Vagina (tissue), 2 donors: ENCODE measurements at regions of chr9 and their contacts with region 1.

Region 1: GRCh38 chr9:92717201-92718085 is 47.2 kb downstream of the BICD2 start:
- DNase-seq: no peak
- H3K4me3 ChIP-seq: no peak overlapping the region
- H3K27ac ChIP-seq: peak overlapping the region; percentile 70
- H3K4me1 ChIP-seq: peaks cover 40% of the 10 kb centered on the region
- H3K27me3 ChIP-seq: no peaks in the 10 kb centered on the region
- CTCF ChIP-seq: no peak
- POLR2A ChIP-seq: no peak

Region 2: DNA sequence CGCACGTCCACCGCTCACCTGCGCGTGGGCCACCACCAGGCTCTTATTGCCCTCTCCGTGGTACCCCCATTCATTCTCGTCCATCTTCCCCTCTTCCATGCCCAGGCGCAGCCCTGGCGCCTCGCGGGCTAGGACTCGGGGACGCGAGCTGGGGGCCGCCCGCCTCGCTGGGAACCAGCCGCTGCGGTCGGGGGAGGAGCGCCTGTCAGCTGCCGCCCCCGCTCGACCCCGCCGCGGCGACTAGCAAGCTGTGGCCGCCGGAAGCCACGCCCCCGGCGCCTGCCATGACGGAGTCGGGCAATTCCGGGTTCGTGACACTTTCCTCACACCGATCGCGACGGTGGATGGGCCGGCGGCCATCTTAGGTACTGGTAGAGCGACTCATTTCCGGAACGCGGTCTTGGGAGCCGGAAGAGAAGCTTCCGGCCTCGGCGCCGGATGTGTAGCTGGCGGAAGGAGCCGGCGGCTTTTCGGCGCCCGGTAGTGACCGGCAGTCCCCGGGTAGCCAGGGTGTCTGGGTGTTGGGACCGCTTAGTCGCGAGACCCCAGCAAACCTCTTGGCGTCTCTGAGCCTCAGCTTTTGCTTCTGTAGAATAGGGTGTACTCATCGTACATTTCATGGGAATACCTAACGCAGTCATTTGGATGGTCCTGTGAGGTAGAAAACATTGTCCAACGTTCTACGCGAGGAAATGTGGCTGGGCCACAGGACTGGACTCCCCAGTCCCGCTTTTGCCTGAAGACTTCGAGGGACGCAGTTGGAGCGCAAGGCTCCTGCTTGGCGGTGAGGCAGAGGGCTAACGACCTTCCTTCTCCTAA is 47.3 kb before region 1 on chr9 and contains the start of gene IPPK:
- intact Hi-C with region 1: no loop called
- DNase-seq: peak in 1 of 2 donors; percentile 99
- H3K4me3 ChIP-seq: peak within 1 kb of the TSS; percentile 76 to 80
- H3K27ac ChIP-seq: peak within 1 kb of the TSS; percentile 82
- H3K4me1 ChIP-seq: peaks cover 49% of the 10 kb centered on the region
- H3K27me3 ChIP-seq: no peaks in the 10 kb centered on the region
- CTCF ChIP-seq: no peak
- POLR2A ChIP-seq: peak in 1 of 2 donors; percentile 39
- total RNA-seq, gene IPPK: 39.5 TPM

Region 3: DNA sequence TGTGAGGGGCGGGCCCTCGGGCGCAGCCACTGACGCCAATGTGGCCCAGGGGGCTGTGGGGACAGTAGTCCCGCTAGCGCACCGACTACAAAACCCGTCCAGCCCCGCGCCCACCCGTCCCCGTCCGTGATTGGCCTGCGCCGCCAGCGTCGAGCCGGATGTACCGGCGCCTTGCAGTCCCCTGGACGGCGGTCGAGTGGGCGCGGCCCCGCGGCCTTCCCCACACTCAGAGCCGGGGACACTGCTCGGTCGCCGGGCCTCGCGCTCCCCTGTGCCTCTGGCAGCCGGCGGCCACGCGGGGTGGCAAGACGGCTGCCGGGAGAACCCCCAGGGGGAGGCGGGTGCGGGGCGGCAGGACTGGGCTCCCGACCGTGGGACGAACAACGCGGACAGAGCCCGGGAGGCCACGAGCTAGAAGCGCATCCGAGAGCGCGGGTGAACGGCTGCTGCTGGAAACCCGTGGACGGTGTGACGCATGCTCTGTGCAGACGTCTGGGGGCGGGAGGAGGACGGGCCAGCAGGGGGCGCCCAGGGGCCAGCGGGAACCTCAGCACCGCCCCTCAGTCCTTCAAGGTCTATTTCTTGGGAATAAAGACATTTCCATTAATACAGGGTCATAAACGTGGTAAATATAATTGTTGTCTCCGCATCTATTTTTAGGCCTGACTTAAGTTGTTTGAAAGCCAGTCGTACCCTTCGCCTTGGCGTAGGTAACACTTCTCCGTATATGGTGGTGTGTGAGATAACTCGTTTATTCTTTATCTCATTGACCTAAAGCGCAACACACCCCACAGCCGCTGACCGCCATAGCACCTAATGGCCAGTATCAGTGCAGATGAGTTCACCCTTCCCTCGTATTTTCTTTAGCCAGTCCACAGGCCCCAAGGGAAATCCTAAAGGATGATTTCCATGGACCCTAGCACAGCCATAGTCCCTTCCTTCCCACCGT is 47.8 kb after region 1 on chr9:
- intact Hi-C with region 1: no loop called
- DNase-seq: peak in 1 of 2 donors; percentile 98
- H3K4me3 ChIP-seq: peak overlapping the region; percentile 90 to 92
- H3K27ac ChIP-seq: peak overlapping the region; percentile 98
- H3K4me1 ChIP-seq: peaks cover 45% of the 10 kb centered on the region
- H3K27me3 ChIP-seq: no peaks in the 10 kb centered on the region
- CTCF ChIP-seq: peak; percentile 77 to 93 (median 87)
- POLR2A ChIP-seq: peak in 1 of 2 donors; percentile 81

Region 4: DNA sequence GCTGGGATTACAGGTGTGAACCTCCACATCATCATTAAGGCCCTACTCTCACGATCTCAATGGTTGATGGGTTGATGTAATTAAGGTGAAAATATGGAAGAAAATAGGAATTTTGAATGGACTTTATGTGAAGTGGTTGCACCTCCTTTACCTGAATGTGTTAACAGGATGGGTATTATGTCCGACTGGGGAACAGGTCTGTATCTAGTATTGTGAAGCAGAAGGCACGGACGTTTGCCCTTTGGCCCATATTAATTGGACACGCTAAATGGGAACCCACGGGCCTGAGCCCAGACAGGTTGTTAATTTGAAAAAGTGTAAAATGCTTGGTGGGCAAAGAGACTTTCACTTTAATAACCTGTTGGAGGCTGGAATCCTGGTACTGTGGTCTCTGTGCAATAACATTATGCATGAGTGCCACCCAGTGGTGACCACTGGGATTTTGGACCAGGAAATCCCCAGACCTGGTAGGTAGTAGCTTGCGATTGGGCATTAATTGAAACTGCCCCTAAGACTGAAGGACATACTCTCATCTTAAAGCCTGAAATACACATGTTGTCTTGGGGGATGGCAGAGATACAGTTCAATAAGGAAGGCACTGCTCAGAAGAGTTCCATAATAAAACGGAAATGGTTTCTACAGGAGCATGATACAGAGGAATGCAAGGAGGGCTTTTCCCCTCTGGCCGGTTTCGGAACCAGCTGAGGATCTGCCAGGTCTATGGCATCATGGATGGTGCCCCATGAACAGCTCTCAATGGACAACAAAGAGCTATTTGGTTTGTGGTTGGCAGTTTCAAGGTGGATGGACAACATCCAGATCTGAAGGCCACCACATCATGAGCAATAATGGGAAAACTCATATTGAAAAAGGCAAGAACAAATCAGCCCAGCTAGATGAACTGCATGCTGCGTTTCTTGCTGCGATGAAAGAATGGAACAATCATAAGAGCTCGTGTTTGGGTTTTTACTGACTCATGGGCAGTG is 73.4 kb after region 1 on chr9:
- intact Hi-C with region 1: loop called (anchors 2 kb)
- DNase-seq: no peak
- H3K4me3 ChIP-seq: no peak overlapping the region
- H3K27ac ChIP-seq: no peak overlapping the region
- H3K4me1 ChIP-seq: no peaks in the 10 kb centered on the region
- H3K27me3 ChIP-seq: no peaks in the 10 kb centered on the region
- CTCF ChIP-seq: peak; percentile 82 to 86 (median 85)
- POLR2A ChIP-seq: no peak